Upper lobe of right lung (tissue), 1 donor: ENCODE measurements at regions of chr17 and their contacts with region 1.

Region 1: GRCh38 chr17:80426681-80427326 is 11.8 kb downstream of the ENDOV start:
- DNase-seq: peak; percentile 88
- ATAC-seq: peak; percentile 91
- H3K4me3 ChIP-seq: no peak overlapping the region
- H3K27ac ChIP-seq: no peak overlapping the region
- H3K4me1 ChIP-seq: peaks cover 6% of the 10 kb centered on the region
- H3K27me3 ChIP-seq: no peaks in the 10 kb centered on the region
- CTCF ChIP-seq: peak; percentile 98

Region 2: DNA sequence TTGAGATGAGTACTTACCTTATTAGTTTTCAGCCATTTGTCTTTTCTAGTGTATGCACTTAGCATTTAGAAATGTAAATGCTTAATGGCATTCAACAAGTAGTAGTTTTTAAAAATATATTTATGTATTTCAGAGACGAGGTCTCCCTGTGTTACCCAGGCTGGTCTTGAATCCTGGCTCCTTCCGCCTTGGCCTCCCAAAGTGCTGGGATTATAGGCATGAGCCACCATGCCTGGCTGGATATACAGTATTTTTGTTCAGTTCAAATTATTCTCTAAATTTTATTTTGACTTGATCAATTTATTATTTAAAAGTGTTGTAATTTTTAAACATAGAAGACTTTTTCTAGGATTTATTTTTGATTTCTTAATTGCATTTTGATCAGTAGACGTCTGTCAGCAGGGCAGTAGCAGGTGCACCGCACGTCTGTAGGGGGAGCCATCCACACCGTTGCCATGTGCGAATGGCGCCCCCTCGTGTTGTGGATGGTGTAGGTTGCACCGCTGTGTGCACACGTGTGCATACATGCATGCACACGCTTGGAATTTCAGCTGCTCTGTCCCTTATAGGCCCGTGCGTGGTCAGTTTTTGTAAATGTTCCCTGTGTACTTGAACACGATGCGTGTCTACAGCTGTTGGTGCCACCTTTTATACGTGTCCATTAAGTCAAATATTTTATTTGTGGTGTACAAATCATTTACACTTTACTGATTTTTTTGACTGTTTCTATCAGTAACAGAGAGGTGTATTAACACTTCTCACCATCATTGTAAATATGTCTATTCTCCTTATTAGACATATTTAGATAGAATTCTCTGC is 148.5 kb after region 1 on chr17:
- intact Hi-C with region 1: loop called (anchors 10 kb)
- DNase-seq: peak; percentile 93
- ATAC-seq: peak; percentile 100
- H3K4me3 ChIP-seq: no peak overlapping the region
- H3K27ac ChIP-seq: no peak overlapping the region
- H3K4me1 ChIP-seq: no peaks in the 10 kb centered on the region
- H3K27me3 ChIP-seq: no peaks in the 10 kb centered on the region
- CTCF ChIP-seq: peak; percentile 99

Region 3: GRCh38 chr17:80968602-80969029 is 541.8 kb after region 1 on chr17:
- intact Hi-C with region 1: loop called (anchors 5 kb)
- DNase-seq: no peak
- ATAC-seq: no peak
- H3K4me3 ChIP-seq: no peak overlapping the region
- H3K27ac ChIP-seq: no peak overlapping the region
- H3K4me1 ChIP-seq: peaks cover 21% of the 10 kb centered on the region
- H3K27me3 ChIP-seq: peaks cover 20% of the 10 kb centered on the region
- CTCF ChIP-seq: no peak

Region 4: GRCh38 chr17:80981062-80981902 is 554.5 kb after region 1 on chr17:
- intact Hi-C with region 1: loop called (anchors 5 kb)
- DNase-seq: no peak
- ATAC-seq: peak; percentile 48
- H3K4me3 ChIP-seq: no peak overlapping the region
- H3K27ac ChIP-seq: no peak overlapping the region
- H3K4me1 ChIP-seq: peaks cover 9% of the 10 kb centered on the region
- H3K27me3 ChIP-seq: peaks cover 9% of the 10 kb centered on the region
- CTCF ChIP-seq: peak; percentile 74